ENCODE measurements at regions of chr19 and their contacts with region 1.

Region 1: DNA sequence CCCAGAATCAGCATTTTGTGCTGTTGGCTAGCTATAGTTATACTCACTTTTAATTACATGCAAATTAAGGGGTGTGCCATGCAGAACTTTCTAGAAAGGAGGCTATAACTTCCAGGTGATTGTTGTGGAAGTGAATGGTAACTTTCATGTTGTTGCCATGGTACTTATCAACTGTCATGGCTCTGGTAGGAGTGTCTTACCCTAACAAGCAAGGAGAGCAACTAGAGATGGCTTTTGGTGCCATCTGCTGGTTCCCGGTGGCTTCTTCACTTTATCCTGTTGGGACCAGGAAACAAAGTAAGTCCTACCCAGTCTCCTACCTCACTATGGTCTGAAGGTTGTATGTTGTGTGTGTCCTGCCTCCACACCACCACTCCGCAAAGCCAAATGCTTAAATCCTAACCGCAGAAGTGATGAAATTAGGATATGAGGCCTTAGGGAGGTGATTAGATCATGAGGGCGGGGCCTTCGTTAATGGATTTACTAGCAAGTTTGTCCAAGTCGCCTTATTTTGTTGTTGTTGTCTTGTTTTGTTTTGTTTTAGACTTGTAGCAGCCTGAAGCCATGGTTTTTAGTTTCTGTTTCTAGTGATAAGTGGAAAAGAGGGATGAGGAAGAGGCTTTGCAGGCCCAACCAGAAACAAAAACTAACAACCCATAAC is 22.6 kb downstream of the FBXL12 start:
- DNase-seq: peak; percentile 72 to 85 (median 76)
- H3K4me3 ChIP-seq: no peak overlapping the region
- H3K27ac ChIP-seq: no peak overlapping the region
- H3K4me1 ChIP-seq: no peaks in the 10 kb centered on the region
- H3K27me3 ChIP-seq: no peaks in the 10 kb centered on the region
- CTCF ChIP-seq: peak; percentile 62 to 70 (median 68)
- EP300 ChIP-seq: no peak
- POLR2A ChIP-seq: no peak

Region 2: GRCh38 chr19:9140159-9140874 is 655.9 kb before region 1 on chr19 and contains the start of gene ZNF317:
- intact Hi-C with region 1: loop called in 1 of 4 experiments (anchors 10 kb)
- DNase-seq: peak; percentile 90 to 94 (median 91)
- H3K4me3 ChIP-seq: peak within 1 kb of the TSS; percentile 93
- H3K27ac ChIP-seq: peak within 1 kb of the TSS in 1 of 2 donors; percentile 64
- H3K4me1 ChIP-seq: peaks cover 4% of the 10 kb centered on the region
- H3K27me3 ChIP-seq: no peaks in the 10 kb centered on the region
- CTCF ChIP-seq: no peak
- EP300 ChIP-seq: no peak
- POLR2A ChIP-seq: peak; percentile 54
- total RNA-seq, gene ZNF317: 10.8 to 33.3 (median 27.1) TPM

Region 3: GRCh38 chr19:9205501-9206113 is 590.6 kb before region 1 on chr19:
- intact Hi-C with region 1: loop called (anchors 5 to 10 kb)
- DNase-seq: peak; percentile 56 to 81 (median 74)
- H3K4me3 ChIP-seq: peak overlapping the region; percentile 26
- H3K27ac ChIP-seq: no peak overlapping the region
- H3K4me1 ChIP-seq: no peaks in the 10 kb centered on the region
- H3K27me3 ChIP-seq: no peaks in the 10 kb centered on the region
- CTCF ChIP-seq: peak; percentile 50 to 66 (median 50)
- EP300 ChIP-seq: no peak
- POLR2A ChIP-seq: no peak

Region 4: DNA sequence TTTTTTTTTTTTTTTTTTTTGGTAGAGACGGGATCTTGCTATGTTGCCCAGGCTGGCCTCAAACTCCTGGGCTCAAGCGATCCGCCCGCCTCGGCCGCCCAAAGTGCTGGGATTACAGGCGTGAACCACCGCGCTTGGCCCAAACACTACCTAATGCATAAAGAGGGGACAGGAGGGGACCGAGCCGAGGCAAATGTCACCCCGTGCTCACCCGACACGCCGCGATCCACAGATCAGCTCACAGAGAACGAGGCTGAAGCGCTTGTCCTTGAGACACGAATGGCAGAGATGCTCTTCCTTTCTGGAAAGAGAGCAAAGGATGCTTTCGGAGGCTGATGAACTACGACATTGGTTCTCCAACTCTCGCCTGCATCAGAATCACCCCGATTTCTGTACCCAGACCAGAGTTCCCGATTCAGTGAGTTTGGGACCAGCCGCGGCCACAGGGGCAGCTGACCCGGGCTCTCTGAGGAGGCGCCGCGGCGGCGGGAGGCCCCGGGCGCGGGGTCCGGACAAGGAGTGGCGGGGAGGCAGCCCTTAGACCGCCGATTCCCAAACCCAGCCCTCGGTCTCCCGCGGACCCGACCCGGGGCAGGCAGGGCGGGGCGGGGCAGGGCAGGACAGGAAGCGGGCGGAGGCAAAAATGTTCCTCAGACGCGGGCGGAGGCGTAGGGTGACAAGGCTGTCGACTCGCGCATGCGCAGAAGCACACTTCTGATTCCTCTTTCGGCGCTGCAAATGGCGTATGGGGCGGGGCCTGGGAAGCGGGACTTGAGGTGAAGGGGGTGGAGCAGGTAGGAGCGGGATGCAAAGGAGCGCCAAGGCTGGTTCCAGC is 486.9 kb before region 1 on chr19 and contains the start of gene ZNF699:
- intact Hi-C with region 1: loop called in 1 of 4 experiments (anchors 10 kb)
- DNase-seq: peak; percentile 98 to 99 (median 99)
- H3K4me3 ChIP-seq: peak within 1 kb of the TSS; percentile 97
- H3K27ac ChIP-seq: peak within 1 kb of the TSS; percentile 72 to 90
- H3K4me1 ChIP-seq: peaks cover 1% of the 10 kb centered on the region
- H3K27me3 ChIP-seq: no peaks in the 10 kb centered on the region
- CTCF ChIP-seq: no peak
- EP300 ChIP-seq: no peak
- POLR2A ChIP-seq: peak; percentile 47
- total RNA-seq, gene ZNF699: 9.2 to 31.2 (median 14.2) TPM

Region 5: GRCh38 chr19:9621156-9622037 is 174.8 kb before region 1 on chr19 and contains the start of gene ZNF561:
- intact Hi-C with region 1: loop called in 2 of 4 experiments (anchors 5 kb)
- DNase-seq: peak; percentile 83 to 91 (median 87)
- H3K4me3 ChIP-seq: peak within 1 kb of the TSS; percentile 81
- H3K27ac ChIP-seq: peak within 1 kb of the TSS; percentile 69 to 79
- H3K4me1 ChIP-seq: peaks cover 7% of the 10 kb centered on the region
- H3K27me3 ChIP-seq: no peaks in the 10 kb centered on the region
- CTCF ChIP-seq: peak in 1 of 3 donors; percentile 3
- EP300 ChIP-seq: no peak
- POLR2A ChIP-seq: no peak
- total RNA-seq, gene ZNF561: 30.9 to 48.3 (median 39.5) TPM

Region 6: DNA sequence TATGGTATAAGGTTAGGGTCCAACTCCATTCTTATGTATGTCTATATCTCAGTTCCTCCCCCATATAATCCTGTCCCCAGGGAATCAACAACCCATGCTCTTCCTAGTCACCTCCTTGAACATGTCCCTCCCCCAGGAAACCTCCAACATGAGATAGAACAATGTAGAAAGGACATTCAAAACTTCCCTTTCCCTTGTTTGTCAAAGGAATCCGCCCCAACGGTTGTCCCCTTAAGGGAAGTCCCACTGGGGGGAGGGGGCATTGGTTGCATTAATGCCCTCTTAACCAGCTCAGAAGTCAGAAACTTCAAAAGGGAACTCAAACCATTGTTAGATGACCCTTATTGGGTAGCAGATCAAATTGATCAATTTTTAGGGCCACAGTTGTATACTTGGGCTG is 168.4 kb before region 1 on chr19:
- intact Hi-C with region 1: loop called in 2 of 4 experiments (anchors 5 kb)
- DNase-seq: no peak
- H3K4me3 ChIP-seq: no peak overlapping the region
- H3K27ac ChIP-seq: no peak overlapping the region
- H3K4me1 ChIP-seq: no peaks in the 10 kb centered on the region
- H3K27me3 ChIP-seq: no peaks in the 10 kb centered on the region
- CTCF ChIP-seq: no peak
- EP300 ChIP-seq: no peak
- POLR2A ChIP-seq: no peak

Measured in ovary (tissue), 10 donors.